AG04450 (cell line): ENCODE measurements at regions of chr18 and their contacts with region 1.

Region 1: GRCh38 chr18:35972197-35973052 is at the start of gene RMP24:
- DNase-seq: peak; percentile 89
- H3K4me3 ChIP-seq: peak within 1 kb of the TSS; percentile 97
- H3K27ac ChIP-seq: peak within 1 kb of the TSS; percentile 75
- H3K27me3 ChIP-seq: no peaks in the 10 kb centered on the region
- CTCF ChIP-seq: no peak

Region 2: DNA sequence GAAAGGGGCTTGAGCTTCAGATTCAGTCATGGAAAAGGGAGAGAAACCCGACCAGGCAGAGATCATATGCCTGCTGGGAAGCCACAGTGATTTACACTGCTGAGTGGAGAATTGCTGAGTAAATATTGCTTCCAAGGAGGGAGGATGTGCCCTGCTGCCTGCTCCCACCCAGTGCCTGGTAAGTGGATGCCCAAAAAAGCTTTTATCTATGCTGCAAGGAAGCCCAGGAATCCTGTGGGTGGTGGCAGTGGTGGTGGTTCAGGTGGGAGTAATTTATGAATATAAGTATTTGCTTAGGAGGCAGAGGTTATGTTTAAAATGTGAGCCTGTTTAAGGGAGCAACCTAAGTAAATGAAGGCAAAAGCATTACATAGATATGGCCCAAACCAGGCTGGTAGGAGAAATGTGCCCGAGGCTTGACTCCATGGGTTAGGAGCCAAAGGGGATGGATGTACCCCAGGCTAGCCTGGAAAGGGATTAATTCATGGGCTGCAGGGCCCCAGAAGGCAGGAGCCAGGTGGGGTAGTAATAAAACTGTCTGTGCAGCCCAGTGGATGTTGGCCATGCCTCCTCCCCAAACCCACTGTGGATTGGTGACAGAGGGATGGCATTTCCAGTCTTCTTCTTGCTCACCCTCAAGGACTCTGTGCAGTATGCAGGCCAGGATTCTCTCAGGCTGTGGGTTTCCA is 514.0 kb before region 1 on chr18:
- CTCF ChIA-PET with region 1: interaction called, 12 read pairs
- POLR2A ChIA-PET with region 1: no interaction called
- DNase-seq: no peak
- H3K4me3 ChIP-seq: no peak overlapping the region
- H3K27ac ChIP-seq: peak overlapping the region; percentile 41
- H3K27me3 ChIP-seq: no peaks in the 10 kb centered on the region
- CTCF ChIP-seq: no peak

Region 3: DNA sequence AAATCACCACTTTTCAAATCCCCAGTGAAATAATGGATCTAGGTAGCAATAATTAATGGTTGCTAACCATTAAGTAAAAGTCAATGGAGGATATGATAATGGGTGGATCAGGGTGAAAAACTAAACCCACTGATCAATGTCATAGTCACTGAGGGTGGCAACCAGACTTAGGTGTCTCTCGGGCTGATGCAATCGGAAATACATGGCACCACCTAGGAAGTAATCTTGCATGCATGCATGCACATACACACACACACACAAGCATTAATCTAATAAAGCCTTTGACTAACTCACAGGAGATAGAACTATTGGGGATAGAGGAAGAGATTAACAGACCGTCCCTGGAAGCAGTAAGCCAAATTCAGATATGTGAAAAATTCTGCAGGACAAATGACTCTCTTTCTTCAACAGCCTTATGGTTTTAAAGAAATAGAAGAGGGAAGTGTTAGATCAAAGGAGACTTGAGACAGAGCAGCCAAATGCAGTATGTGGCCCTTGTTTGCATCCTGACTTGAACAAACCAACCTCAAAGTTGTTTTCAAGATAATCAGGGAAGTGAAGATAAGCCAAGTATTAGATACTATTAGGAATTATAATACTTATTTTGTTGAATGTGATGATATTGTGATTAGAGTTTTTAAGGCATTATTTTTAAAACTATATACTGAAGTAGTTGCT is 185.9 kb before region 1 on chr18:
- CTCF ChIA-PET with region 1: no interaction called
- POLR2A ChIA-PET with region 1: no interaction called
- DNase-seq: no peak
- H3K4me3 ChIP-seq: no peak overlapping the region
- H3K27ac ChIP-seq: no peak overlapping the region
- H3K27me3 ChIP-seq: no peaks in the 10 kb centered on the region
- CTCF ChIP-seq: no peak

Region 4: GRCh38 chr18:35835833-35836232 is 136.6 kb before region 1 on chr18:
- CTCF ChIA-PET with region 1: no interaction called
- POLR2A ChIA-PET with region 1: no interaction called
- DNase-seq: no peak
- H3K4me3 ChIP-seq: no peak overlapping the region
- H3K27ac ChIP-seq: no peak overlapping the region
- H3K27me3 ChIP-seq: no peaks in the 10 kb centered on the region
- CTCF ChIP-seq: no peak

Region 5: GRCh38 chr18:36107477-36107876 is 135.1 kb after region 1 on chr18:
- CTCF ChIA-PET with region 1: no interaction called
- POLR2A ChIA-PET with region 1: no interaction called
- DNase-seq: no peak
- H3K4me3 ChIP-seq: no peak overlapping the region
- H3K27ac ChIP-seq: no peak overlapping the region
- H3K27me3 ChIP-seq: no peaks in the 10 kb centered on the region
- CTCF ChIP-seq: no peak